ENCODE measurements at regions of chr12 and their contacts with region 1.

Region 1: DNA sequence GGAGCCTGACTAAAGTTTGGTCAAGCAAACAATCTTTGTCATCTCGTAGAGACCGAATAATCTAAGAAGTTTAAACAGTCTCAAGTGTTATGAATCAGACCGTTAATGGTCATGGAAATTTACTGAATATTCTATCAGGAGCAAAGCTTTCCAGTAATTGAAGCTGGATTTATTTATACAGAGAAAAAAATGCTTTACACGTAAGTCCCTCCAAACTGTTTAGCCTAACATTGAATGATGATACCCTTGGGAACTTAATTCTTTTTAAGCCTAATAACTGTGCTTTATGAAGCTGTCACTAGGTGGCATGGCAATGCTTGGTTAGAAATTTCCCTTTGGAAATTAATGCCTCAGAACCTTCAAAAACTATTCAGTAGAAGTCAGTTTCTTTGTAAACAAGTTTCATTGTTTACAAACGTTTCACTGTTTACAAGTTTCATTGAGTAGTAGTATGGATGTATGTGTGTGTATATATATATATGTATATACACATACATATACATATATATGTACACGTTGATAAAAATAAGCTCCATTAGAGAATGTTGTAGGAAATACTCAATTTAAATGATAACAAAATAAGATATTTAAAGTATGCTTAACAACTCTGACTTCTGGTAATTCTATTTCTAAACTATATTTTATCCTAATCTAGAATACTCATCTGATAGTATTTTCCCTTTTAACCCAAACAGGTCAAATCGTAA is 32.1 kb downstream of the DEPDC4 start:
- DNase-seq: no peak
- ATAC-seq: peak; percentile 51

Region 2: GRCh38 chr12:100266835-100267618 is 32.3 kb after region 1 on chr12 and contains the starts of genes DEPDC4 and SCYL2:
- intact Hi-C with region 1: no loop called
- DNase-seq: peak; percentile 97
- ATAC-seq: peak; percentile 90
- total RNA-seq, gene DEPDC4: 1.7 to 3.0 TPM
- total RNA-seq, gene SCYL2: 65.7 to 66.0 TPM

Region 3: GRCh38 chr12:100554608-100555077 is 319.9 kb after region 1 on chr12:
- intact Hi-C with region 1: loop called in 1 of 2 experiments (anchors 10 kb)
- DNase-seq: no peak
- ATAC-seq: peak; percentile 89

Region 4: GRCh38 chr12:100733817-100734593 is 499.3 kb after region 1 on chr12:
- intact Hi-C with region 1: loop called in 1 of 2 experiments (anchors 5 kb)
- DNase-seq: no peak
- ATAC-seq: peak; percentile 61

Region 5: DNA sequence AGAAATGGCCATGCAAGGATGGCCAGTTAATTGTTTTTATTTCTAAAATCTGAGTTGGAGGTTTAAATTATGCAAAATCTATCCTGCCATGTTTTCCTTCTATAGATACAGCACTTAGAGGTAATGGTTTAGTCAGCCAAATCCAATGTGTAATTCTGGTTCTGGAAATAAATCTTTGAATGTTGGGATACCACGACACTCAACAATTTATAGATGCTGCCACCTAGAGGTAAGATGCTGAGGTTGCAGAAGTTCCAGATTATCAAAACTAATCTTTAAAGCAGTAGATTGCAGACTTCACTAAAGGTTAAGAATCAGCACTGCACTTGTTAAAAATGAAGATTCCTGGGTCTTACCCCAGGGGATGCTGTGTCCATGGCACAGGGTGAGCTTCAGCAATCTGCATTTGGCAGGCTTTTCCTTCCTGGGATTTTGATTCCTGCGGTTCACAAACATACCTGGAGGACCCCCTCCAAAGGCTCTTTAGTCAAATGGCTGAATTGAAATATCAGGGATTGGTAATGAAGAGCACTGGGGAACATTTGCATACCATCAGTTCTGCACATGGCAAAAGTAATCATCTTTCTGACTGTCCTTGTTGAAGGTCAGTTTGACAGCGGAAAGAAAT is 506.4 kb after region 1 on chr12:
- intact Hi-C with region 1: loop called in 1 of 2 experiments (anchors 5 kb)
- DNase-seq: no peak
- ATAC-seq: no peak

Measured in left colon (tissue), 2 donors.